CD8-positive, alpha-beta T cell (primary cell): ENCODE measurements at regions of chr5 and their contacts with region 1.

Region 1: GRCh38 chr5:157743163-157744050 is at the start of gene LSM11:
- DNase-seq: peak; percentile 84 to 97 (median 91)
- ATAC-seq: peak; percentile 98
- H3K4me3 ChIP-seq: peak within 1 kb of the TSS; percentile 53 to 70
- H3K4me3 Mint-ChIP-seq: peak within 1 kb of the TSS; percentile 92
- H3K27ac ChIP-seq: no peak within 1 kb of the TSS
- H3K27ac Mint-ChIP-seq: peak within 1 kb of the TSS; percentile 86
- H3K4me1 ChIP-seq: peaks cover 13% of the 10 kb centered on the region
- H3K4me1 Mint-ChIP-seq: peaks cover 26% of the 10 kb centered on the region
- H3K27me3 ChIP-seq: no peaks in the 10 kb centered on the region
- H3K27me3 Mint-ChIP-seq: no peaks in the 10 kb centered on the region
- CTCF ChIP-seq: peak; percentile 99
- total RNA-seq, gene LSM11: 0.44 to 0.65 TPM

Region 2: DNA sequence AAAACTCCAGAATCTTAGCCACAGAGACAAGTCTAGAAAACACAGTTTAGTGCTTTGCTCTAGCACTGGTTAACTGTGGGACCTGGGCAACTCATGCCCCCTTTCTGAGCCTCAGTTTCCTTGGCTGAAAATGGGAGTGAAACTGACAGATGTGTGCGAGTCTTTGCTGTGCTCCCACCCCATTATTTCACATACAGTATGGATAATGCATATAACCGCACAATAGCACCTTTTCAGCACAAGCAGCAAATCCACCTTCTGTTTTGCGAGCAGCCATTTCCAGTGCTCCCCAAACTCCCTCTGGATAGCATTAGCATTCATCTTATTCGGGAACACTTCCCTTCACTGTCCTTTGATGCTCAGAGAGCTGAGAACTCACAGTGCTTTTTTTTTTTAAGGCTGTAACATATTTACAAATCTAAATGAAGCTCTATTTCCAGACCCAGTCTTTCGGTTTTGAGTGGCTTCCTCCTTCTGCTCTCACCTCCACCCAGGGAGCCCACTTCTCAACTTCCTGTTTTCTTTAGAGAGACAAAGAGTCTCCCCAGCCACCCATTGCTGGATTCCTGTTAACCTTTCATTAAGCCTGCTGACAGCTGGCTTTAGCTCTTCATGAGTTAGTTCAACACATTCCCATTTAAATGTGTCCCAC is 829.6 kb before region 1 on chr5:
- CTCF ChIA-PET with region 1: no interaction called
- POLR2A ChIA-PET with region 1: no interaction called
- intact Hi-C with region 1: loop called in 1 of 2 experiments (anchors 10 kb)
- DNase-seq: peak in 8 of 9 experiments; percentile 8 to 73 (median 34)
- ATAC-seq: peak; percentile 82
- H3K4me3 ChIP-seq: peak overlapping the region; percentile 27 to 34
- H3K4me3 Mint-ChIP-seq: peak overlapping the region; percentile 82
- H3K27ac ChIP-seq: peak overlapping the region; percentile 8 to 73
- H3K27ac Mint-ChIP-seq: peak overlapping the region; percentile 97
- H3K4me1 ChIP-seq: peaks cover 32% of the 10 kb centered on the region
- H3K4me1 Mint-ChIP-seq: peaks cover 59% of the 10 kb centered on the region
- H3K27me3 ChIP-seq: no peaks in the 10 kb centered on the region
- H3K27me3 Mint-ChIP-seq: no peaks in the 10 kb centered on the region
- CTCF ChIP-seq: no peak

Region 3: DNA sequence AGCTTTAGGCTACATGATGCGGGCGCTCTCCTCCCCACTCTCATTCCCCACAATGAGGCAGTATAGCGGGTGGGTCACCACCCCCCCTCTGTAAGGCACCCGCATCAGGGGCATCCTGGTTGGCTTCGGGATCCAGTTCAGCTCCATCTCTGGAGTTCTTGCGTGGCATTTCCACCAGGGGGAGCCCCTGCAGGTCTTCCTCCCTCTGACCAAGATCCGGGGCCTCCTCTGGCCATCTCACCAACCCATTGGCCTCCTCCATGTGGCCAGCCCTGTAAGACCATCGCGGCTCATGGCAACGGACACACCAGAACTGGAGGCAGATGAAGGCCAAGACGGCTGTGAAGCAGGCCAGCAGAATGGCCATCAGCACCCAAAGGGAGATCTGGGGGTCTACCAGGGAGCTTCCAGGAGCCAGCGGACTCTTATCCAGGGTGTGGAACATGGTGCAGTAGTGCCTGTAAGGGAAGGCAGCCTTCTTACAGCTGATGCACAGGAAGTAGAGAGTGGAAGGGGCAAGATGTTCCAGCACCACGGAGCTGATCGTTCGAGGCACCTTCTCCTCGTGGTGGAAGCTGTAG is 400.5 kb before region 1 on chr5:
- CTCF ChIA-PET with region 1: interaction called, 7 read pairs
- POLR2A ChIA-PET with region 1: no interaction called
- intact Hi-C with region 1: loop called in 1 of 2 experiments (anchors 5 kb)
- DNase-seq: peak in 4 of 9 experiments; percentile 32 to 41 (median 35)
- ATAC-seq: peak; percentile 35
- H3K4me3 ChIP-seq: no peak overlapping the region
- H3K4me3 Mint-ChIP-seq: no peak overlapping the region
- H3K27ac ChIP-seq: no peak overlapping the region
- H3K27ac Mint-ChIP-seq: peak overlapping the region; percentile 81
- H3K4me1 ChIP-seq: no peaks in the 10 kb centered on the region
- H3K4me1 Mint-ChIP-seq: peaks cover 24% of the 10 kb centered on the region
- H3K27me3 ChIP-seq: no peaks in the 10 kb centered on the region
- H3K27me3 Mint-ChIP-seq: no peaks in the 10 kb centered on the region
- CTCF ChIP-seq: peak; percentile 49

Region 4: DNA sequence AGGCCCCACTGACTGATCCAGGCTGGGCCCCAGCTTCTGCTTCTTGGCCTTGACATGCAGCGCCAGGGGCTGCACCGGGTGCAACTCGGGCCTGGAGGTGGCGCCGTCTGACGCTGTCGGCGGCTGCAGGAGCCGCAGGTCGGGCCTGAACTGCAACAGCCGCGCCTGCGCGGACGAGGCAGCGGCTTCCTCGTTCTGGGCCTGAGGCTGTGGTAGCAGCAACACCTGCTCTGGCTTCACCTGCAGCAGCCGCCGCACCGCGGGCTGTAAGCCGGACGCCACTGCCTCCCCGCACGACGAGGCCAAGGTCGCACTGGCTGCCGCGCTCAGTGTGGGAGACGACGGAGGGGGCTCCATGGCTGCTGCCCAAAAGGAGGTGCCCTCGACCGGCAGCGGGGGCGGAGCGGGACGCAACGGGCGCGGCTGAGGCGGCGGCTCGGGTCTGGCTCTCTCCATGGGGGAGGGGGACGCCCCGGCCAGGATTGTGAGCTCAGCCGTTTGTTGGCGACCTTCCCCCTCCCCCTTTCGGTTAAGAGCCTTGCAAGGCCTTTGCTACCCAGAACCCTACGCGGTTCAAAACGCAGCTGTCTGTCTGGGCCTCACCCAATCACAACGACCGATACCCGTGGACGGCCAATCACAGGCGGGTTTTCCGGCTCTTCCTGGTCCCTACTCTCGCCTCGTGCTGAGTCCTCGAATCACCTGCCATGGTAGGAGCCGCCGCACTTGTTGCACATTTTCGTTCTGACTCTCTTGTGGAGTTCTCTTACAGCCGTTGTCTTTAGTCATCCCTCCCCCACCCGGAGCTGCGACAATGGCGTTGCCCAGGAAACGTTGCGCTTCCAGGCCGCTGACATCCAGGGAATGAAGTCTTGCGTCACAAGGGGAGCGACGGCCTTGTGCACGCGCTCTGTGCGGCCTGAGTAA is 91.5 kb before region 1 on chr5 and contains the start of gene SOX30:
- CTCF ChIA-PET with region 1: interaction called, 21 read pairs
- POLR2A ChIA-PET with region 1: interaction called, 3 read pairs
- intact Hi-C with region 1: loop called (anchors 1 kb)
- DNase-seq: peak; percentile 65 to 89 (median 78)
- ATAC-seq: peak; percentile 98
- H3K4me3 ChIP-seq: peak within 1 kb of the TSS; percentile 42 to 63
- H3K4me3 Mint-ChIP-seq: peak within 1 kb of the TSS; percentile 77
- H3K27ac ChIP-seq: peak within 1 kb of the TSS; percentile 7 to 22
- H3K27ac Mint-ChIP-seq: peak within 1 kb of the TSS; percentile 81
- H3K4me1 ChIP-seq: no peaks in the 10 kb centered on the region
- H3K4me1 Mint-ChIP-seq: peaks cover 16% of the 10 kb centered on the region
- H3K27me3 ChIP-seq: no peaks in the 10 kb centered on the region
- H3K27me3 Mint-ChIP-seq: no peaks in the 10 kb centered on the region
- CTCF ChIP-seq: no peak
- total RNA-seq, gene SOX30: not detected

Region 5: DNA sequence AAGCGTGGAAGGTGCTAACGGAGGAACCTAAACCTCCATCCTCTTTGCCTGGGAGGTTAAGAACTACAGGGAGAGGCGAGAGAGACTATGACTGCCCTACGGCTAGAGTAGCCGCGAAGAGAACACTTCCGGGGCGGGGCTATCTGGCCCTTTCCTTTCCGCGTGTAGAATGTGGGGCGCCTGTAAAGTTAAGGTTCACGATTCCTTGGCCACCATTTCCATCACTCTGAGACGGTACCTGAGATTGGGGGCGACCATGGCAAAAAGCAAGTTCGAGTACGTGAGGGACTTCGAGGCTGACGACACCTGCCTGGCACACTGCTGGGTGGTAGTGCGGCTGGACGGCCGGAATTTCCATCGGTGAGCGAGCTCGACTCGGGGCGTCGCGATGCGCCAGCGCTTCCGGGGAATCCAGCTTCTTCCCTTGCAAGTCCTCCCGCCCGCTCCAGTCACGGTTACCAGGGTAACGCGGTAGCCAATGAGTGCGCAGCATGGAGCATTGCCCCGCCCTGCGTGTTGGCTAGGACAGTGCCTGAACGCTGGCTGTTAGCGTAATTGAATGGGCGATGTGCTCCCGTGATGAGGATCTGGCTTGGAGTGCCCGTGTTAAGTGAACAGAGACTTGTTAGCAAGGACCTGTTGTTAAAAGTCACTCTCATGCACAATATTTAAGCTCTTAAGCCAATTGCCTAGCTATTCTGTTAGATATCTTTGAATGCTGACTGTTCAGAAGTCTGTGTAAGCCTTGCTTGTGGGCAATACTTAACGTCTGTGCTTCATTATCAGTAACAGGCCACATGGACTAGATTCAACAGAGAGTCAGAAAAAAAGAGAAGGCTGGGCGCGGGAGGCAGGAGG is 11.9 kb before region 1 on chr5 and contains the start of gene THG1L:
- CTCF ChIA-PET with region 1: interaction called, 24 read pairs
- POLR2A ChIA-PET with region 1: interaction called, 17 read pairs
- intact Hi-C with region 1: loop called (anchors 1 kb)
- DNase-seq: peak; percentile 95 to 99 (median 97)
- ATAC-seq: peak; percentile 94
- H3K4me3 ChIP-seq: peak within 1 kb of the TSS; percentile 75 to 82
- H3K4me3 Mint-ChIP-seq: peak within 1 kb of the TSS; percentile 96
- H3K27ac ChIP-seq: peak within 1 kb of the TSS; percentile 68 to 86
- H3K27ac Mint-ChIP-seq: peak within 1 kb of the TSS; percentile 95
- H3K4me1 ChIP-seq: no peaks in the 10 kb centered on the region
- H3K4me1 Mint-ChIP-seq: peaks cover 14% of the 10 kb centered on the region
- H3K27me3 ChIP-seq: no peaks in the 10 kb centered on the region
- H3K27me3 Mint-ChIP-seq: no peaks in the 10 kb centered on the region
- CTCF ChIP-seq: no peak
- total RNA-seq, gene THG1L: 6.9 to 7.1 TPM

Region 6: DNA sequence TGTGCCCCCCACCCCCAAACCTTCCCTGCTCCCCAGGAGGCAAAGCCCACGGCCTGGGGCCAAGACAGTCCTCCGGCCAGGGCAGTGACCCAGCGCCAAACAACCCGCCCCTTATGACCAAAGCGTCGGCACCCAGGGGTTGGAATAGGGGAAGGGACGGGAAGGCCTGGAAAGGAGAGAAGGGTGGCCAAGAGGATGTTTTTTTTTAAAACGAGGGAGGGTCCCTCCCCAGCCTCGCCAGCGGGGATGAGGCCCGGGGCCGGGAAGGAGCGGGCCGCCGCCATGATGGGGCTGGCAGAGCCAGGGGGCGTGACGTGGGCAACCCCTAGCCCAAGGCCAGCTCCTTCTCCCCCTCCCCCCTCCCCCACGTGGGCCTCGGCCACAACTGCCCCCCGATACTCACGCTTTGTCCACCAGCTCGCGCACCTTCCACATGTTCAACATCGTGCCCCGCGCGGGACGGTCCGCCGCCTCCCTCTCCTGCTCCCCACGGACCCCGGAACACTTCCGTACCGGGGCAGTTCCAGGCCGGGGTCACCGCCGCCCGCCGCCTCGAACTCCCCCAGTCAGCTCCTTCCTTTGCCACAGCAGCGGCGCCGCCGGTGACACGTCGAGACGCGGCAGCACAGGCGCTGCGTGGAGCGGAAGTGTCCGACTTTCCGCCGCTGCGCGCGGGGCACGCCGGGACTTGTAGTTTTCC is 115.3 kb after region 1 on chr5 and contains the start of gene CLINT1:
- CTCF ChIA-PET with region 1: interaction called, 3 read pairs
- POLR2A ChIA-PET with region 1: no interaction called
- intact Hi-C with region 1: loop called in 1 of 2 experiments (anchors 1 kb)
- DNase-seq: peak; percentile 66 to 93 (median 87)
- ATAC-seq: peak; percentile 94
- H3K4me3 ChIP-seq: peak within 1 kb of the TSS; percentile 78 to 86
- H3K4me3 Mint-ChIP-seq: peak within 1 kb of the TSS; percentile 89
- H3K27ac ChIP-seq: peak within 1 kb of the TSS; percentile 74 to 90
- H3K27ac Mint-ChIP-seq: peak within 1 kb of the TSS; percentile 95
- H3K4me1 ChIP-seq: peaks cover 41% of the 10 kb centered on the region
- H3K4me1 Mint-ChIP-seq: peaks cover 65% of the 10 kb centered on the region
- H3K27me3 ChIP-seq: no peaks in the 10 kb centered on the region
- H3K27me3 Mint-ChIP-seq: no peaks in the 10 kb centered on the region
- CTCF ChIP-seq: no peak
- total RNA-seq, gene CLINT1: 94.7 to 101 TPM

Region 7: DNA sequence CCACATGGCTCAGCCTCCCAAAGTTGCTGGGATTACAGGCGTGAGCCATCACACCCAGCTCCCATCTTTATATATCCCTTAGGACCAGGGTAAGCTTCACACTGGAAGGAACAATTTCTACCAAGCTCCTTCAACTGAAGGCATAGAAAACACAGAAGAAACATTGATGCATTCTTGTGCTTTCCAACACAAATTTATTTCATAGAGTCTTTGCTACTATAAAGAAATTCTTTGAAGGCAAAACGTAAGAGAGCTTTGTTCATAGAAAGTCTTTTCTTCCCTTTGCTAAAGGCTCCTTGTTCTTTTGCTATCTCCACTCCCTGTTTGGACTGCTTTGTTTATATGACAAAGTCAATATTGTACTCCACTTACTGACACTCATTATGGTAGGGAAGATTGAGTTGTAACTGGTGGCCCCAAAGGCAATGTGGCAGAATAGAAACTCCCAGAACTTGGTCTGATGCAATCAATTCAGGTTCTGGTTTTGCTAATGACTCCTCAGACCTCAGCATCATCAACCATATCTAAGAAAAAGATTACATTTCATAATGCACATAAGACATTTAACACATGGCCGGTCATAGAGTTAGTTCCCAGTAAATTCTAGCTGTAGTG is 213.0 kb after region 1 on chr5:
- CTCF ChIA-PET with region 1: no interaction called
- POLR2A ChIA-PET with region 1: no interaction called
- intact Hi-C with region 1: no loop called
- DNase-seq: no peak
- ATAC-seq: no peak
- H3K4me3 ChIP-seq: no peak overlapping the region
- H3K4me3 Mint-ChIP-seq: no peak overlapping the region
- H3K27ac ChIP-seq: no peak overlapping the region
- H3K27ac Mint-ChIP-seq: no peak overlapping the region
- H3K4me1 ChIP-seq: no peaks in the 10 kb centered on the region
- H3K4me1 Mint-ChIP-seq: no peaks in the 10 kb centered on the region
- H3K27me3 ChIP-seq: no peaks in the 10 kb centered on the region
- H3K27me3 Mint-ChIP-seq: peaks cover 13% of the 10 kb centered on the region
- CTCF ChIP-seq: no peak